Left colon (tissue), 2 donors: ENCODE measurements at regions of chr6 and their contacts with region 1.

Region 1: GRCh38 chr6:149925974-149926777 is 3.3 kb upstream of the RAET1G start:
- DNase-seq: peak; percentile 87 to 95
- ATAC-seq: peak; percentile 89

Region 2: DNA sequence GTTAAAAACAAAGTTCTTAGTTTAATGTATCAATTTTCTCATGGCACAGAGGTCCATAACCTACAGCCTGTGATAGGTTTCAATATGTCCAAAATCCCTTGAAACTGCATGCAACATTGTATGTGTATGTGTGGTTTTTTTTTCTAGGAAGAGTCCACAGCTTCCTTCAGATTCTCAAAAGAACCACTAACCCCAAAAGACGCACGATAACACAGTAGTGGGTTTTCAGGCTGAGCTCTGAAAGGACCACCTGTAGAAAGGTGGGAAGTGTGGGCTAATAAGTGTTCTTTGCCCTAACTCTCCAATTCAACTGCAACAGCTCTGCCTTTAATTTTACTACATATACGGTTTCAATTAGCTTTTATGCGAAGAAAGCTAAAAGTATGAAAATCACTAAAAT is 266.1 kb before region 1 on chr6:
- intact Hi-C with region 1: no loop called
- DNase-seq: no peak
- ATAC-seq: no peak

Region 3: GRCh38 chr6:149717588-149718458 is 208.4 kb before region 1 on chr6 and contains the start of gene LATS1:
- intact Hi-C with region 1: loop called in 1 of 2 experiments (anchors 10 kb)
- DNase-seq: peak; percentile 89 to 93
- ATAC-seq: peak; percentile 87
- total RNA-seq, gene LATS1: 21.7 to 22.7 TPM

Region 4: DNA sequence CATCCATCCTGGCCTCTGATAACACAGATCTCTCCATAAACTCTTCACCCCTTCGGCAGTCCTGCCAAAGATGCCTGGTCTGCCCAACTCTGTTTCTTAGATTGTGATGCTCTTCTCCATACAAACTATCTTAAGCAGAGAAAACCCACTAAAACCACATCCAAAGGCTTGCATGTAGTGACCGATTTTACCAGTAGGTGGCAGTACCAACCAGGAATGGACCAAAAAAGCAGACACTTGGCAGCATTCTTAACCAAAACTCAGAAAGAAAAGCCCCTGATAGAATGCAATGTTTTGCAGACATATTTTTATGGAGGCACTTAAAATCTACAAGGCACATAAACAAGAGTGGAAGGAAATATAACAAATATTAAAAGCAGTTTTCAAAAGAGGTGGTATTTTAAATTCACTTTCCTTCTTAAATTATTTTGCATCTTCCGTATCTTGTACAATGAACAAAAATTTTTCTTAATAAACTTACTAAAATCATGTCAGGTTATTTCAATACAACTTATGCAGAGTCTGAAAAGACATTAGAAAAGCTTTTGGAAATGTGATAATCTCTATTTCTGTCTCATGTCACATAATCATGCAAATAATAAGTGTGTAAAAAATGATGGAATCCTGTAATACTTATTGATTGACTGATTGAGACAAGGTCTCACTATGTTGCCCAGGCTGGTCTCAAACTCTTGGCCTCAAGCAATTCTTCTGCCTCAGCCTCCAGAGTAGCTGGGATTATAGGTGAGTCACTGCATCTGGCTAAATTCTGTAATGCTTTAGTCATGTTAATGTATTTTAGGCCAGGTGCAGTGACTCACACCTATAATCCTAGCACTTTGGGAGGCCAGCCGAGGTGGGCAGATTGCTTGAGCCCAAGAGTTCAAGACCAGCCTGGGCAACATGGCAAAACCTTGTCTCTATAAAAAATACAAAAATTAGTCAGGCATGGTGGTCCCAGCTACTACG is 91.4 kb before region 1 on chr6:
- intact Hi-C with region 1: loop called in 1 of 2 experiments (anchors 5 kb)
- DNase-seq: peak in 1 of 2 donors; percentile 67
- ATAC-seq: no peak

Region 5: GRCh38 chr6:149840345-149841075 is 85.7 kb before region 1 on chr6:
- intact Hi-C with region 1: loop called (anchors 5 to 10 kb)
- DNase-seq: peak; percentile 64 to 80
- ATAC-seq: peak; percentile 91

Region 6: GRCh38 chr6:150016324-150017185 is 90.4 kb after region 1 on chr6:
- intact Hi-C with region 1: no loop called
- DNase-seq: peak in 1 of 2 donors; percentile 46
- ATAC-seq: peak; percentile 91